AG04450 (cell line): ENCODE measurements at regions of chr14 and their contacts with region 1.

Region 1: GRCh38 chr14:34322940-34323418 is 139.1 kb downstream of the SPTSSA start:
- DNase-seq: peak; percentile 26
- H3K4me3 ChIP-seq: no peak overlapping the region
- H3K27ac ChIP-seq: no peak overlapping the region
- H3K27me3 ChIP-seq: peaks cover 3% of the 10 kb centered on the region
- CTCF ChIP-seq: peak; percentile 75

Region 2: GRCh38 chr14:33839193-33840076 is 483.5 kb before region 1 on chr14:
- CTCF ChIA-PET with region 1: interaction called, 12 read pairs
- POLR2A ChIA-PET with region 1: no interaction called
- DNase-seq: no peak
- H3K4me3 ChIP-seq: no peak overlapping the region
- H3K27ac ChIP-seq: no peak overlapping the region
- H3K27me3 ChIP-seq: no peaks in the 10 kb centered on the region
- CTCF ChIP-seq: peak; percentile 75

Region 3: DNA sequence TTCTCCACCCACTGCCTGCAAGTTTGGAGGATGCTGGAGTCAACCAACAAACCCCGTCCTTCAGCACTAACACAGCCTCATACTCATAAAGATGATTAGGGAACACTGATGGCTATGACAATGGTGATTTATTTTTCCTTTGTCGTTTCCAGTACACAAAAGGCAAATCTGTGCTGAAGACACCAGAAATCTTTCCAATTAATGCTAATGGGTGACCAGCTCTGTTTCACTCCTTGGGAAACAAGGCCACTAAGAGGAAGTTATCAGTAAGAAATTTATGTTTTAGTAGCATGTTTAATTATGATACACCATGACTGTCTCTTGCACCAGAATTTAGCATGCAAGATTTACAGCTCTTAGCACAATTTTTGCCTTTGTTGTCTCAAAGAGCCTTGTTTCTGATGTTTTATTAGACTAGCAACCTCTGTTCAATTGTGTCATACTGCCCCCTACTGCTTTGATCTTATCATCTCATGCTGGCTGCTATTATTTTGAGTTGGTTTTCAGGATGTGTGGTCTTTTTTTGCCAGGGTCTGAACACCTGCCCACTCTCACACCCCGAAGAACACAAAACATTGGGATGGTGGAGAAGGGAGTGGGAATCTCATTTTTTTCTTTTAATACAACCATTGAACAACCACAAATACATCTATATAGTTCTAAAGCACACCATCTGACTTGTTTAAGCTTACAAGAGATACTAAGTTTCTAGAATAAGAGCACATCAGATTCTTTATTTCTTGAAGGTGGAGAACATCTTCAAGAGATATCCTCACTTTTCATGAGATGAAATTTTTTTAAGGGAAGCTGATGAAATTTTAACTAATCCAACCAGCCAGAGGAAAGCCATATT is 21.9 kb before region 1 on chr14:
- CTCF ChIA-PET with region 1: interaction called, 16 read pairs
- POLR2A ChIA-PET with region 1: no interaction called
- DNase-seq: no peak
- H3K4me3 ChIP-seq: no peak overlapping the region
- H3K27ac ChIP-seq: no peak overlapping the region
- H3K27me3 ChIP-seq: no peaks in the 10 kb centered on the region
- CTCF ChIP-seq: peak; percentile 50

Region 4: GRCh38 chr14:34310724-34311123 is 12.3 kb before region 1 on chr14:
- CTCF ChIA-PET with region 1: interaction called, 35 read pairs
- POLR2A ChIA-PET with region 1: no interaction called
- DNase-seq: no peak
- H3K4me3 ChIP-seq: no peak overlapping the region
- H3K27ac ChIP-seq: no peak overlapping the region
- H3K27me3 ChIP-seq: no peaks in the 10 kb centered on the region
- CTCF ChIP-seq: no peak

Region 5: DNA sequence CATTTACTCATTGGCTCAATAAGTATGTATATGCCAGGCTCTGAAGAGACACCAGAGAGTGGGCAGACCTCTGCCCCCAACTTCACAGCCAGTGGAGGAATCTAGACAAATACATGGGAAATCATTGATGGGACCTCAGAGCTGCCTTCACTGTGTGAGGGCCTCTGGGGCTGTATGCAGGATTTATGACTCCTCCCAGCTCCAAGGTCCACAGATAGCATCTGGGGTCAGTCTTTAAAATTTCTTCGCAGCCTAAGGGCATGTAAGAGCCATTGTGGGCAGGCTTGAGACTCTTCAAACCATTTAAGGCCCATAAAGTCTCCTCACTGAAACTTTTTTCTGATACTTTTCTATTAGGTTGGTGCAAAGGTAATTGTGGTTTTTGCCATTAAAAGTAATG is 13.5 kb after region 1 on chr14:
- CTCF ChIA-PET with region 1: interaction called, 28 read pairs
- POLR2A ChIA-PET with region 1: no interaction called
- DNase-seq: no peak
- H3K4me3 ChIP-seq: no peak overlapping the region
- H3K27ac ChIP-seq: no peak overlapping the region
- H3K27me3 ChIP-seq: no peaks in the 10 kb centered on the region
- CTCF ChIP-seq: no peak

Region 6: GRCh38 chr14:34355584-34356263 is 32.7 kb after region 1 on chr14:
- CTCF ChIA-PET with region 1: interaction called, 30 read pairs
- POLR2A ChIA-PET with region 1: no interaction called
- DNase-seq: peak; percentile 38
- H3K4me3 ChIP-seq: no peak overlapping the region
- H3K27ac ChIP-seq: peak overlapping the region; percentile 39
- H3K27me3 ChIP-seq: no peaks in the 10 kb centered on the region
- CTCF ChIP-seq: no peak

Region 7: GRCh38 chr14:34379816-34380463 is 57.0 kb after region 1 on chr14:
- CTCF ChIA-PET with region 1: no interaction called
- POLR2A ChIA-PET with region 1: no interaction called
- DNase-seq: no peak
- H3K4me3 ChIP-seq: no peak overlapping the region
- H3K27ac ChIP-seq: no peak overlapping the region
- H3K27me3 ChIP-seq: peaks cover 10% of the 10 kb centered on the region
- CTCF ChIP-seq: no peak

Region 8: DNA sequence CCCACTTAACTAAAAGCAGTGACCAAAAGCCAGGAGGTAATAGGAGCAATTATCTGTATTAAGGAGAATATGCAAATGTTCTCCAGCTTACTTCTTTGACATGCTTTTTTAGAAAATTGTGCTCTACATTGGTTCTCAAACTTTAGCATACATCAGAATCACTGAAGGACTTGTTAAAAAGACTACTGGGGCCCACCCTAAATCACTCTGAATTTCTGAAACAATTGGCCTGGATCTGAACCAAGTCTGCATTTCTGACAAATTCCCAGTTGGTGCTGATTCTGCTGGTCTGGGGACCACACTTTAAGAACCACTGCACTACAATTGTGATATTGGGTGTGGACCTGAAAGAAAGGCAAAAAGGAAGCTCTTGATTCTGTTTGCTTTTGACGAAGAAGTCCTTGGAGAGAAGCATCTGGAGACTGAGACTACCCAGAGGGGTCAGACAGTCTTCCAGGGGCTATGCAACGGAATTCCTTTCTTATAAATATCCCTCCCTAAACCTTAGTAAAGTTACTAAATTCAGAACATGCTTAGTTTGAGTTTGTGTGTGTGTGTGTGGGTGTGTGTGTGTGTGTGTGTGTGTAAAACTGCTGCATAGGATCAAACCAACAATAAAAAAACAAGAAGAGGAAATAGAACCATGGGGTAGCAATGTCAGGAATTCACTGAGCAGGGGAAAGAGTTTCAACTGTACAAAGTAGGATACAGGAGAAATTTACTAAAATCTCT is 179.7 kb after region 1 on chr14:
- CTCF ChIA-PET with region 1: interaction called, 16 read pairs
- POLR2A ChIA-PET with region 1: no interaction called
- DNase-seq: no peak
- H3K4me3 ChIP-seq: no peak overlapping the region
- H3K27ac ChIP-seq: peak overlapping the region; percentile 54
- H3K27me3 ChIP-seq: no peaks in the 10 kb centered on the region
- CTCF ChIP-seq: no peak

Region 9: DNA sequence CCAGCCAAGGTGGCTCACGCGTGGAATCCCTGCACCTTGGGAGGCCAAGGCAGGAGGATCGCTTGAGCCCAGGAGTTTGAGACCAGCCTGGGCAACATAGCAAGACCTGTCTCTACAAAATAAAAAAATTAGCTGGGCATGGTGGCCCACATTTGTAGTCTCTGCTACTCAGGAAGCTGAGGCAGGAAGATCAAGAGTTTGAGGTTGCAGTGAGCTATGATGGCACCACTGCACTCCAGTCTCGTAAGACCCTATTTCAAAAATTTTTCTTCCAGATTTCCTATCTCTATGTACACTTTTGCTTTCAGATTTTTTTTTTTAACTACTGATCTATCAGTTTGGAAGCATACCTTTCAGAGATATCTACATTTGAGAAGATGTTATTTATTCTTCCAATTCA is 291.7 kb after region 1 on chr14:
- CTCF ChIA-PET with region 1: no interaction called
- POLR2A ChIA-PET with region 1: no interaction called
- DNase-seq: no peak
- H3K4me3 ChIP-seq: no peak overlapping the region
- H3K27ac ChIP-seq: no peak overlapping the region
- H3K27me3 ChIP-seq: no peaks in the 10 kb centered on the region
- CTCF ChIP-seq: no peak